ENCODE measurements at regions of chr7 and their contacts with region 1.

Region 1: DNA sequence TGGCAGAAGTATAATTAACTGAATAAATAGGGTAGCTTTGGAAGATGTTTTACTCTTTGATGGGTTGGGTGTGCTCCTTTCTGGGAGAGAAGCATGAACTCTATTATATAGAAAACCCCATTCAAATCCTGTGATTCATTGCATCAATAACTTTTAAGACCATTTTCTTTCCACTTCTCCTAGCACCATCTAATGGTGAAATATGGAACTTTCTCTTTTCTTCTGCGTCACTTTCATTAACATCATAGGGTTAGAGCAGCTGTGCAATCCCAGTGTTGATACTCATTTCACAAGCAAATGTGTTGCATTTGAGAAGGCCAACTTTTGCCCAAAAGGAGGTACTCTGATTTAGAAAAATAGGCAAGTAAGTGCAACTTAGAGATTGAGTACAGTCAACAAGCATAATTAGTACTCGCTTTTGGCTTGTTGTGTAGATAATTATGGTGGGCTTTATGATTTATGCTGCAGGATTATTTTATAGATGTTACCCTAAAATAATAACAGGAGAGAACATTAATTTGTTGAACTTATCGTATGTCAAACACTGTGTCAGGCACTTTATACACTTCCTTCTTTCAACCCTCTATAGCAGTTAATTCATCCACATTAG is 92.9 kb downstream of the CPED1 start:
- DNase-seq: no peak
- H3K4me3 ChIP-seq: no peak overlapping the region
- H3K27ac ChIP-seq: no peak overlapping the region
- H3K4me1 ChIP-seq: peaks cover 11% of the 10 kb centered on the region
- H3K27me3 ChIP-seq: no peaks in the 10 kb centered on the region
- CTCF ChIP-seq: peak; percentile 28 to 74 (median 65)
- POLR2A ChIP-seq: no peak

Region 2: DNA sequence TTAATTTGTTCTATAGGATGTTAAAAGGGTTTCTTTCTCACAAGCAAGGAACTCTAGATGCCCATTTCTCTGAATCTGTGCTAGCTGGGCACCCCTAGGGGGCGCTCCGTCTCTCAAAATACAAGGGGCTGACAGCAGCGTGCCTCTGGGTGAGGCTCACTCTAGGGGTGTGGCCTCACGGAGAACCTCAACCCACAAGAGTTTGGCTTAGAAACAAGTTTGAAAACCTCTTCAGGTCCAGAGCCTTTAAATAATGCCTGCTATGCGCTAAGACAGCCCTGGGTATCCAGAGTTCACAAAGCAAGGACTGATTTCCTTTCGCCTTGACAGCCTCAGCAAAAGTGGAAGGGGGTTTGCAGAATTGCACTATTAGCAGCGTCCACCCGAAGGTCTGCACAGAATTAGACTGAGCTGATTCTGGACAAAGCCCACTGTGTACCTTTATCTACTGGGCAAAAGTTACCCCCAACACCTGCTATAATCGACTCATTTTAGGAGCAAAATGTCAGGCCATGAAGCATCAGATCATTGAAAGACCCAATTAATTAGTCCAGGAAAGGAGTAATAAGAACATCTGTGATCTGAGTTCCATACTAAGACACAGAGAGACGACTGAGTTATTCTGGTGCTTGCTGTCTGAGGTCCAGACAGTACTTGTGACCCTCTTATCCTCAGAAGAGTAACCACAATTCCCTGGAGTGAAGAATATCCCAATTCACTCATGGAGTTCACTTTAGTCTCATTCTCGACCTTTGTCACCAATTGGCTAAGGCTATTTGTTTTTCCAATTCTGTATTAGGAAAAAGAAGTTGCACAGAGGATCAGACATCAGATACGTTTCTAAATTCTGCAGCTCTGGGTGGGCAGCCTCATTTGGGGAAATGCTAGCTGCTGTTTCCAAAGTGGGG is 93.5 kb before region 1 on chr7:
- intact Hi-C with region 1: loop called (anchors 1 kb)
- DNase-seq: no peak
- H3K4me3 ChIP-seq: peak overlapping the region; percentile 42 to 50
- H3K27ac ChIP-seq: peak overlapping the region; percentile 94
- H3K4me1 ChIP-seq: no peaks in the 10 kb centered on the region
- H3K27me3 ChIP-seq: no peaks in the 10 kb centered on the region
- CTCF ChIP-seq: peak; percentile 61 to 93 (median 93)
- POLR2A ChIP-seq: no peak

Region 3: GRCh38 chr7:121485467-121486243 is 404.2 kb after region 1 on chr7:
- intact Hi-C with region 1: no loop called
- DNase-seq: no peak
- H3K4me3 ChIP-seq: no peak overlapping the region
- H3K27ac ChIP-seq: no peak overlapping the region
- H3K4me1 ChIP-seq: peaks cover 22% of the 10 kb centered on the region
- H3K27me3 ChIP-seq: no peaks in the 10 kb centered on the region
- CTCF ChIP-seq: no peak
- POLR2A ChIP-seq: no peak